Activated naive CD4-positive, alpha-beta T cell treated with anti-CD3 and anti-CD28 coated beads for 36 hours (primary cell): ENCODE measurements at regions of chr22 and their contacts with region 1.

Region 1: DNA sequence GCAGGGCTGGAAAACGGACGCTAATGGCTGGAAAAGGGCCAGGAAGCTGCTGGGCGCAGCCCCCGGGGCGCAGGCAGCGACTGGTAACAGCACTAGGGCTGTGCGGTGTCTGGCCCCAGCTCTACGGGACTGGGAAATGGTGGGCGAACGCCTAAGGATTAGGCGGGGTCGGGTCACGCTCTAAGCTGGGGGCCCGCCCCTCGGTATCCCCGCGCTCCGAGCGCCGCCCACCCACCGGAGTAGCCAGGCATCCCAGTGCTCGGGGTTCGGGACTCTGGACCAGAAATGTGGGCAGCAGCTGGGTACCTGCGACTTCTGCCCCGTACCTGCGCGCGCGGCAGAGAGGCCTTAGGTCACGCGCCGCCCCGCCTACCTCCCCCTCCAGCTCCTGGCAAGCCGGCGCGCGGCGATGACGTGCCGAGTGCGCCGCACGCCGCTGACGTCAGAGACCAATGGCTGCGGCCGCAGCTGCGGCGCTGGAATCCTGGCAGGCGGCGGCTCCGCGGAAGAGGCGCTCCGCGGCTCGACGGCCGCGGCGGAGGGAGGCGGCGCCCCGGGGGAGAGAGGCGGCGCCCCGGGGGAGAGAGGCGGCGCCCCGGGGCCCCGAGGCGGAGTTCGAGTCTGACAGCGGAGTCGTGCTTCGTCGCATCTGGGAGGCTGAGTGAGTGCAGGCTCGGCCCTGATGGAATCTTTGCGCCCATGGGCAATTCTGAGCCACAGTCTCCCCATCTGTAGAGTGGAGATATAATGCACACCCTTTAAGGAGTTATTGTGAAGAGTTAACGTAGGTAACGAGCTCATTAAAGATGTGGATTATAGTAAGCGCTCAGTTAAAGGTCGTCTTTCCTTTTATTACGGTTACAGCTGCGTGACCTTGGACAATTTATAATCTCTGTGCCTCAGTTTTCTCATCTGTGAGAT is at the starts of genes HPS4 and SRRD:
- DNase-seq: peak; percentile 90
- H3K4me3 Mint-ChIP-seq: peak within 1 kb of the TSS; percentile 82
- H3K27ac Mint-ChIP-seq: peak within 1 kb of the TSS; percentile 84
- H3K4me1 Mint-ChIP-seq: peaks cover 59% of the 10 kb centered on the region
- H3K27me3 Mint-ChIP-seq: no peaks in the 10 kb centered on the region
- total RNA-seq, gene HPS4: 48.0 to 51.5 TPM
- total RNA-seq, gene SRRD: 20.8 to 21.6 TPM

Region 2: GRCh38 chr22:26398741-26399153 is 85.0 kb before region 1 on chr22:
- CTCF ChIA-PET with region 1: interaction called, 6 read pairs
- intact Hi-C with region 1: loop called (anchors 5 kb)
- DNase-seq: peak; percentile 84
- H3K4me3 Mint-ChIP-seq: no peak overlapping the region
- H3K27ac Mint-ChIP-seq: no peak overlapping the region
- H3K4me1 Mint-ChIP-seq: peaks cover 2% of the 10 kb centered on the region
- H3K27me3 Mint-ChIP-seq: no peaks in the 10 kb centered on the region

Region 3: GRCh38 chr22:26494506-26494905 is 10.8 kb after region 1 on chr22:
- CTCF ChIA-PET with region 1: no interaction called
- intact Hi-C with region 1: no loop called
- DNase-seq: no peak
- H3K4me3 Mint-ChIP-seq: no peak overlapping the region
- H3K27ac Mint-ChIP-seq: peak overlapping the region; percentile 72
- H3K4me1 Mint-ChIP-seq: peaks cover 3% of the 10 kb centered on the region
- H3K27me3 Mint-ChIP-seq: no peaks in the 10 kb centered on the region

Region 4: DNA sequence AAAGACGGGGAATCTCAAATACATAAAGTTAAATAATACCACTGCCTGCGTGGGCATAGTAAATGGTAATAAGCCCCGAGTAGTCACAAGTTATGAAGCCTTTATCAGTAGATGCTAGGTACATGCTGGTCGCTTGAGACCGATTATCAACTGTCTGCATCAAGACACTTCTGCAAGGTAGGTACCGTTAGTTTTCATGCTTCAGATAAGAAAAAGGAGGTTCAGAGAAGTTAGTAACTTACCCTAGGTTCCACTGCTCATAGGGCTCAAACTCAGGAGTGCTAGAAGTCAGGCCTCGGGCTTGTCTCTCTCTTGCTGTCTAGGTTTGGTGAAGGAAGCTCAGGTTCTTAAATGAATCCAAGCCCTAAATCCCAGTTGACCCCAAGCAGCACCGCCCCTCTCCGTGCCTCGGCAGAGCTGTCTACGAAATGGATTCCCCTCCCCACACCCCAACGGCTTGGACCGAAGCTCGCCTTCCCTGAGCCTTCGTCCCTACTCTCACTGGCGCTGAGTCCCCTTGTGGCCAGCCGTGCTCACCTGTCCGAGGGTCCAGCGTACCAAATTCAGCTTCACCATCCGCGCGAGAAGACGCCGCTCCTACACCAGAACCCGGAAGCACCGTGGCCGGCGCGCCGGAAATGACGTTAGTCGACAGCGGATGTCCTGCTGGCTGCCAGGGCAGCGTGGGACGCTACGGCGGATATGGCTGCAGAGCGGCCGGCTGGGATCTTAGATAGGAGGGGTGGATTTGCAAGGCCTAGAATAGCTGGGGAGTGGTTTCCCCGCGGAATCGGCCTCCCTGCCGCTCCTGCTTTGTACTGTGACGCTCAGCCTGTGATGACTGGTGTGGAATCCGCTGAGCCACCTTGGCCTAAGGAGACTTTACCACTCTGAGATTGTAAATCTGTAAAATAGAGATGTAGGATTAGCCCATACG is 28.4 kb after region 1 on chr22 and contains the start of gene TFIP11:
- CTCF ChIA-PET with region 1: no interaction called
- intact Hi-C with region 1: loop called (anchors 1 kb)
- DNase-seq: peak; percentile 95
- H3K4me3 Mint-ChIP-seq: peak within 1 kb of the TSS; percentile 93
- H3K27ac Mint-ChIP-seq: peak within 1 kb of the TSS; percentile 80
- H3K4me1 Mint-ChIP-seq: peaks cover 44% of the 10 kb centered on the region
- H3K27me3 Mint-ChIP-seq: no peaks in the 10 kb centered on the region
- total RNA-seq, gene TFIP11: 33.3 to 34.4 TPM